SK-N-SH (cell line): ENCODE measurements at regions of chr19 and their contacts with region 1.

Region 1: GRCh38 chr19:10251792-10252694 is at the start of gene MRPL4:
- DNase-seq: peak; percentile 94
- H3K4me3 ChIP-seq: peak within 1 kb of the TSS; percentile 67 to 69
- H3K27ac ChIP-seq: peak within 1 kb of the TSS; percentile 63 to 83
- H3K4me1 ChIP-seq: peaks cover 0 to 5% of the 10 kb centered on the region in 2 experiments; a peak in 1 of 4 replicates
- H3K27me3 ChIP-seq: no peaks in the 10 kb centered on the region
- CTCF ChIP-seq: no peak
- EP300 ChIP-seq: no peak
- RAD21 ChIP-seq: no peak
- polyA plus RNA-seq, gene MRPL4: 76.0 and 110 TPM in 2 replicates

Region 2: GRCh38 chr19:10027158-10027693 is 224.8 kb before region 1 on chr19:
- CTCF ChIA-PET with region 1: interaction called, 16 read pairs
- POLR2A ChIA-PET with region 1: no interaction called
- DNase-seq: no peak
- H3K4me3 ChIP-seq: peak overlapping the region in 1 of 2 experiments; percentile 30; a peak in 1 of 4 replicates
- H3K27ac ChIP-seq: no peak overlapping the region
- H3K4me1 ChIP-seq: peaks cover 0 to 4% of the 10 kb centered on the region in 2 experiments; a peak in 1 of 4 replicates
- H3K27me3 ChIP-seq: peaks cover 63% of the 10 kb centered on the region
- CTCF ChIP-seq: no peak
- EP300 ChIP-seq: no peak
- RAD21 ChIP-seq: no peak

Region 3: GRCh38 chr19:10106100-10106936 is 145.7 kb before region 1 on chr19 and contains the start of gene PPAN:
- CTCF ChIA-PET with region 1: interaction called, 14 read pairs
- POLR2A ChIA-PET with region 1: no interaction called
- DNase-seq: peak; percentile 100
- H3K4me3 ChIP-seq: peak within 1 kb of the TSS; percentile 51 to 95
- H3K27ac ChIP-seq: peak within 1 kb of the TSS; percentile 59 to 87
- H3K4me1 ChIP-seq: peaks cover 0 to 24% of the 10 kb centered on the region in 2 experiments; a peak in 1 of 4 replicates
- H3K27me3 ChIP-seq: no peaks in the 10 kb centered on the region
- CTCF ChIP-seq: no peak
- EP300 ChIP-seq: no peak
- RAD21 ChIP-seq: no peak
- polyA plus RNA-seq, gene PPAN: 62.5 and 75.6 TPM in 2 replicates

Region 4: GRCh38 chr19:10120538-10121189 is 131.4 kb before region 1 on chr19:
- CTCF ChIA-PET with region 1: interaction called, 14 read pairs
- POLR2A ChIA-PET with region 1: interaction called, 5 read pairs
- DNase-seq: no peak
- H3K4me3 ChIP-seq: no peak overlapping the region
- H3K27ac ChIP-seq: peak overlapping the region in 1 of 2 experiments; percentile 76; a peak in 3 of 4 replicates
- H3K4me1 ChIP-seq: peaks cover 3 to 13% of the 10 kb centered on the region in 2 experiments; a peak in 1 of 4 replicates
- H3K27me3 ChIP-seq: no peaks in the 10 kb centered on the region
- CTCF ChIP-seq: no peak
- EP300 ChIP-seq: no peak
- RAD21 ChIP-seq: no peak

Region 5: GRCh38 chr19:10159610-10160009 is 92.4 kb before region 1 on chr19:
- CTCF ChIA-PET with region 1: no interaction called
- POLR2A ChIA-PET with region 1: no interaction called
- DNase-seq: no peak
- H3K4me3 ChIP-seq: no peak overlapping the region
- H3K27ac ChIP-seq: no peak overlapping the region
- H3K4me1 ChIP-seq: no peaks in the 10 kb centered on the region
- H3K27me3 ChIP-seq: no peaks in the 10 kb centered on the region
- CTCF ChIP-seq: no peak
- EP300 ChIP-seq: no peak
- RAD21 ChIP-seq: no peak

Region 6: DNA sequence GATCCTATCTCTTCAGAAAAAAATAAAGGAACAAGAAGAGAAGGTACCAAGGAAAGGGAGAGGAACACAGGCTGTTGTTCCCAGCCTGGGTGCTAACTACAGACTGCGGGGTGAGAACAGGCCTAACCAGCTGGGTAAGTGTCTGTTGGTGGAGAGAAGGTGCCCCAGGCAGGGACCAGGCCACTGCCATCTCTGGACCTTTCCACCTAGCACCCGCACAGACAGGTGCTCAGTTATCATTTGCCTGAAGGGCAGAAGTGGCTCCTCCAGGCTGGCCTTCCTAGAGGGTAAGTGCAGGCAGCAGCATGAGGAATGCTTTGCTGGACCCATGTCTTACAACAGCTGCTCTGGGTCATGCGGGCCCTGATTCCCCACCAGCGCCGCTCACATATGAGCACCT is 67.4 kb before region 1 on chr19:
- CTCF ChIA-PET with region 1: interaction called, 15 read pairs
- POLR2A ChIA-PET with region 1: no interaction called
- DNase-seq: no peak
- H3K4me3 ChIP-seq: no peak overlapping the region
- H3K27ac ChIP-seq: no peak overlapping the region
- H3K4me1 ChIP-seq: no peaks in the 10 kb centered on the region; a peak in 1 of 4 replicates
- H3K27me3 ChIP-seq: no peaks in the 10 kb centered on the region
- CTCF ChIP-seq: no peak
- EP300 ChIP-seq: no peak
- RAD21 ChIP-seq: no peak

Region 7: GRCh38 chr19:10230861-10231611 is 21.0 kb before region 1 on chr19 and contains the start of gene S1PR2:
- CTCF ChIA-PET with region 1: interaction called, 54 read pairs
- POLR2A ChIA-PET with region 1: interaction called, 3 read pairs
- DNase-seq: peak; percentile 97
- H3K4me3 ChIP-seq: peak within 1 kb of the TSS; percentile 72 to 98
- H3K27ac ChIP-seq: peak within 1 kb of the TSS; percentile 54 to 88; a peak in 3 of 4 replicates
- H3K4me1 ChIP-seq: peaks cover 0 to 25% of the 10 kb centered on the region in 2 experiments; a peak in 1 of 4 replicates
- H3K27me3 ChIP-seq: no peaks in the 10 kb centered on the region
- CTCF ChIP-seq: no peak
- EP300 ChIP-seq: no peak; a peak in 1 of 4 replicates
- RAD21 ChIP-seq: no peak
- polyA plus RNA-seq, gene S1PR2: 3.6 and 3.8 TPM in 2 replicates

Region 8: DNA sequence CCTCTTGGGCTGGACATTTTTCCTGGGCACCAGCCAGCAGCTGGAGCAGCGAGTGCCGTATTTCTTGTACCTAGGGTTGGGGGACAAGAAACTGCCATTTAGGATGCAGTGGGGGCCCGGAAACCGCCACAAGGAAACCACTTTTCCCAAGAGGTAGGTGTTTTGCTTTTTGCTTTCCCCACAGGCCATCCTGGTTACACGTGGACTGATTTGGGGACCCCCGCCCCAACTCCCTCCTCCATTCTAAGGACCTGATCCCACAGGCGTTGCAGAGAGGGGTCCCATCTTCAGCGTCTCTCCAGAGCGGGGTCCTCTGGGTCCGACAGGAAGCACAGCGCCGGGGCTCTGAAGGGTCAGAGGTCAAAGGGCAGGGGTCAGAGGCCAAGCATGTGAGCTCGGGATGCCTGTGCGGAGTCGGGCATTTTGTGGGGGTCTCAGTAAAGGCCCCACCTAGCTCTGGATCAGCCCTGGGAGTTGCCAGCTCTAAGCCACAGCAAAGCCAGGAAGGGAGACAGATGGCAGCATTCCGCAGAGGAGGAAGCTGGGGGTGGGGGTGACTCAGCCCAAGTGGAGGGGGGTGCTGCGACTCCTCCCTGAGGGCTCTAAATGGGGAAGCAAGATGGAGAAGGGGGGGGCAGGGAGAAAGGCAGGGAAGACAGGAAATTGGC is 53.2 kb after region 1 on chr19:
- CTCF ChIA-PET with region 1: no interaction called
- POLR2A ChIA-PET with region 1: no interaction called
- DNase-seq: no peak
- H3K4me3 ChIP-seq: no peak overlapping the region
- H3K27ac ChIP-seq: no peak overlapping the region
- H3K4me1 ChIP-seq: no peaks in the 10 kb centered on the region
- H3K27me3 ChIP-seq: no peaks in the 10 kb centered on the region
- CTCF ChIP-seq: no peak
- EP300 ChIP-seq: no peak
- RAD21 ChIP-seq: no peak

Region 9: DNA sequence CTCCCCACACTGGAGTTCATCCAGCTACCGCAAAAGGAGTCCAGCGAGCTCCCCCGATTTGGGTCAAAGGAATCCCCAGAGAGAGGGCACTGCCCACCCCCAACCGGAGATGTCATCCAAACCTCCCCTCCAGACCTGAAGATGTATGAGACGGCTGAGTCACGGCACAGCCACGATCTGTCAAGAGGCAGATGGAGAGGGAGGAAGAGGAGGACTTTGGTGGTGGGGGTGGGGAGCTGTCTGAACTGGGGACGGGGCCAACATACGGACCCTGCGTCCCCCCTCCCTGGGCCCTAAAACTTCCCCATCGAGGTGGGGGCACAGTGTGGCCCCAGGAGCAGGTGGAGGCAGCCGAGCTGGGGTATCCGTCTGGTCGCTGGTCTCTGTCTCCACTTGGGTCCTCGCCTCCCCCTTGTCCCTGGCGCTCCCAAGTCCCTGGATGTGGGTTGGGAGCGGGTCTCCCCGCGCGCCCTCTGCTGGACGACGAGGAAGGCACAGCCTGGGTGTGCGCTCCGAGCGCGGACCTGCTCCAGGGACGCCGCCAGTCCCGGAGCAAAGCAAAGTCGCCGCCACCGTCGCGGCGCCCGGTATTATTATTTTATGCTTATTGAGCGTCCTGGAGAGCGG is 172.1 kb after region 1 on chr19:
- CTCF ChIA-PET with region 1: no interaction called
- POLR2A ChIA-PET with region 1: no interaction called
- DNase-seq: peak; percentile 97
- H3K4me3 ChIP-seq: peak overlapping the region; percentile 27 to 48; a peak in 3 of 4 replicates
- H3K27ac ChIP-seq: no peak overlapping the region
- H3K4me1 ChIP-seq: peaks cover 0 to 10% of the 10 kb centered on the region in 2 experiments; a peak in 1 of 4 replicates
- H3K27me3 ChIP-seq: peaks cover 42% of the 10 kb centered on the region
- CTCF ChIP-seq: peak; percentile 87
- EP300 ChIP-seq: no peak
- RAD21 ChIP-seq: peak; percentile 57